HEK293 (cell line): ENCODE measurements at regions of chr3 and their contacts with region 1.

Region 1: GRCh38 chr3:195850857-195851543 is 39.3 kb upstream of the MUC4 start:
- H3K4me3 ChIP-seq: no peak overlapping the region
- H3K27ac ChIP-seq: no peak overlapping the region
- H3K4me1 ChIP-seq: no peaks in the 10 kb centered on the region
- CTCF ChIP-seq: peak; percentile 95

Region 2: DNA sequence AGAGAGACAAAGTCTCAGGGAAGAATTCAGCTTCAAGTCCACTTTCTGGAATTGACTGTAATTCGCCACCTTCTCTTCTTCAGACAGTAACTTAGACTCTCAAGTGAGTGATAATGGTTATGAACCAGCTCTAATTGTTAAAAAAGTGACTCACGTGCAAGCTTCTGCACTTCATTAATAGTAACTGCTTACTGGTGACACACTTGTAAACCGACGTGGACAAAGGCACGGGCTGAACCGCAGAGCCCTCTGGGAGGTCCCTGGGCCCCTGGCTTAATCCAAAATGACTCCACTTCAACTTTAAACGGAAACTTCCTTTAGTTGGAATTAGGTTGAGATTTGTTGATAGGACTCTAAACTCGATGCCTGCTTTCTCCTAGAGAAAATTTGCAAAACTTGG is 56.3 kb before region 1 on chr3:
- CTCF ChIA-PET with region 1: interaction called, 10 read pairs
- POLR2A ChIA-PET with region 1: no interaction called
- H3K4me3 ChIP-seq: no peak overlapping the region
- H3K27ac ChIP-seq: no peak overlapping the region
- H3K4me1 ChIP-seq: no peaks in the 10 kb centered on the region
- CTCF ChIP-seq: no peak

Region 3: DNA sequence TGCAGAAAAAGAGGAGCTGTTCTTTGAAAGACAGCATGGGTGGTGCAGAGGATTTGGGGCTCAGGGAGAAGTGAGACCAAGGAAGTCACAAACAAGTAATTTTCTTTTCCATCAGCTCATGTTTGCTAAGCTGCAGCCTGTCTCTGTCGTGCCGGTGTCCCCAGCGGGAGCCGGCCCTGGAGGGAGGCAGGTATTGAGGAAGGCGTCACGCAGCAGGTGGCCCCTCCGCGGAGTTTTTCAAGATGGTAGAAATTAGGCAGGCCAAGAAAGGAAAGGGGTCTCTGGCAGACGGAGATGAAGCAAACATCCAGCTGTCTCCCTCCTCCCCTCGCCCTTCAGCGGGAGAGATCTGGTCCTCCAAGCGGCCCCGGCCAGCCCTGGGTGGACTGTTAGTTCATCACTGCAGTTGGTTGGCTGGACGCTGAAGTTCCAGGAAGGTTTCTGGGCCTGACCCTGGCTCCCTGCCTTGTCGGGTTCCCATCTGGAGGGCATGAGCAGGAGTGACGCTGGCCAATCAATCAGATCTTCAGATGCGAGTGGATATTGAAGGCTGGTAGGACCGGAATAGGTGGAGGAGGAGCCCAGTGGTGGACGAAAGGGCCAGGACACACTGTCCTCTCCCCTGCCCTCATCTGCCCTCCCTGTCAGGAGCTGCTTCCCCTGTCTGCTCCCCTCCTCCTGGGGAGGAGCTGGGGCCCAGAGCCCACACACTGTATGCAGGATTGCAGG is 11.6 kb before region 1 on chr3:
- CTCF ChIA-PET with region 1: interaction called, 10 read pairs
- POLR2A ChIA-PET with region 1: no interaction called
- H3K4me3 ChIP-seq: no peak overlapping the region
- H3K27ac ChIP-seq: no peak overlapping the region
- H3K4me1 ChIP-seq: no peaks in the 10 kb centered on the region
- CTCF ChIP-seq: no peak

Region 4: DNA sequence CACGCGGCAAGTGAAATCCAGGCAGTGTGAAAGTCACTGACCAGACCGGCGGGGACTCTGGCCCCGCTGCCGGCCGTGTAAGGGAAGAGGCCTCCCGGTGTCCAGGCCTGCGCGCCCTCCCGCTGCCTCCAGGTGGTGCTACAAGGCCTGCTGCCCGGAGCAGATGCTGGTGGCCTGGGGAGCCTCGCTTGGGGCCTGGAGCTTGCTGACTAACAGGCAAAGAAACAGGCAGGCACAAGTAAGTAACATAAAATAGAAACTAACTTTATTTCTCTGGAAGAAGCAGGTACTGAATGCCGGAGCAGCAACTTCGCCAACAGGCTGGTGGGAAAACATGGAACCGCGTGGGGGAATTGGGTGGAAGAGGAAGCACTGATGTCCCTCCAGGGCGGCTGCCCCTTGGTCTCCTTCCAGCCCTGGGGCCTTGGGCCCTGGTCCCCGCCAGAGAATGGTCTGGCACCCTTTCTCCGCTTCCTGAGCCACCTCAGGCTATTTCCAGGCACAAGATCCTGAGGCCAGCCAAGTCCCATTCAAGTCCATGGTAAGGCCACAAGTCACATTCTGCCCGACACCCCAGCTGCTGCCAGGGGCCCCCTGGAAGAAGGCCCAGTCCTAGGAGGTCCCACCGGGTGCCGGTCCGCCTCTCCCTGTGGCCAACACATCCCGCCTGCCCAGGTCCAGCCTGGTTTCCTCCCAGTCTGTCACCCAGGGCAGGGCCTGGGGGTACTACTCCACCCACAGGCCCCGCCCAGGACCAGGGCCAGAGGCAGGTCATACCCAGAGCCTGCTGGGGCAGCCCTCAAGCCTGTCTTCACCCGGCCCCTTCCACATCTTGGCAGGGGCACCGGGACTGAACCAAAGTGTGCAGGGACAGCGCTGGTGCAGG is 12.4 kb after region 1 on chr3:
- CTCF ChIA-PET with region 1: interaction called, 11 read pairs
- POLR2A ChIA-PET with region 1: no interaction called
- H3K4me3 ChIP-seq: no peak overlapping the region
- H3K27ac ChIP-seq: no peak overlapping the region
- H3K4me1 ChIP-seq: no peaks in the 10 kb centered on the region
- CTCF ChIP-seq: 0 out of 2 replicates have a peak, but pooled peaks have one; percentile 41

Region 5: DNA sequence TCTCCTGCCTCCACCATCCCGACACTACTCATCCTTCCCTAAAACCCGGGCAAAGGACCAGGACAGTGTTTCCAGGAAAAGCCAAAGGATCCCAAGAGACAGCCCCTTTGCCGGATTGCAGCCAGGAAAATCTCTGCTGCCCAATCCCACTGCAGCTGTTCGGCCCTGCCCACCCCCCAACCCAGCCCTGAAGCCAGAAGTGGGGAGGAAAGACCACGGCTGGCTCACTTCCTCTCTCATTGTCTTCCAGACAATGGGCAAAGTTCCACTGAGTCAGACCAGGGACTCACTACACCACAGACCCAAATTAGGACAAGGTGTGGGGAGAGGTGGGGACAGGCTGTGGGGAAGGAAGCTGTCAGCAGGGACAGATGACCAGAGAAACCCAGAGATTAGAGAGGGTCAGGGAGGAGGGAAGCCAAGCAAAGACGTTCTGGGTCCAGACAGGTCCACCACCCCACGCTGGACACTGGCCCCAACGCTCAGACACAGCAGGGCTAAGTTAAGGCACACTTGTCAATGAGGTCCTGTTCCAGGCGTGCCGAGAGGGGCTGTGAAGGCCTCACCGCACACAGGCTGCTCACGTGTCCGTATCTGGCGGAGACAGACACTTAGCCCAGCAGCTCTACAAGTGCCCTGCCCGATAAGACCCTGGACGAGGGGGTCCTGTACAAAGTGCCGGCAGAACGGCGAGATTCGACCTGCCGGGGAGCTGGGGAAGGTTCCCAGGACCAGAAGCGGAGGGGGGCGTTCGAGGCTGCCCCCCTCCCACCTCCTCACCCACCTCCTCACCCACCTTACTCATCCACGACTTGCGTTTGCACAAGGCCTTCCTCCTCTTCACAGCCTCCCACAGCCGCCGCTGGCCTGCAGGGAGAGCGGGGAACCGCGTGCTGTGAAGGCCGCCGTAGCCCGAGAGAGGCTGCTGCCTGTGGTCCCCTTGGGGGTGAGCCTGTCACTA is 35.5 kb after region 1 on chr3:
- CTCF ChIA-PET with region 1: no interaction called
- POLR2A ChIA-PET with region 1: no interaction called
- H3K4me3 ChIP-seq: no peak overlapping the region
- H3K27ac ChIP-seq: no peak overlapping the region
- H3K4me1 ChIP-seq: no peaks in the 10 kb centered on the region
- CTCF ChIP-seq: no peak